GM10248 (cell line): ENCODE measurements at regions of chr11 and their contacts with region 1.

Region 1: DNA sequence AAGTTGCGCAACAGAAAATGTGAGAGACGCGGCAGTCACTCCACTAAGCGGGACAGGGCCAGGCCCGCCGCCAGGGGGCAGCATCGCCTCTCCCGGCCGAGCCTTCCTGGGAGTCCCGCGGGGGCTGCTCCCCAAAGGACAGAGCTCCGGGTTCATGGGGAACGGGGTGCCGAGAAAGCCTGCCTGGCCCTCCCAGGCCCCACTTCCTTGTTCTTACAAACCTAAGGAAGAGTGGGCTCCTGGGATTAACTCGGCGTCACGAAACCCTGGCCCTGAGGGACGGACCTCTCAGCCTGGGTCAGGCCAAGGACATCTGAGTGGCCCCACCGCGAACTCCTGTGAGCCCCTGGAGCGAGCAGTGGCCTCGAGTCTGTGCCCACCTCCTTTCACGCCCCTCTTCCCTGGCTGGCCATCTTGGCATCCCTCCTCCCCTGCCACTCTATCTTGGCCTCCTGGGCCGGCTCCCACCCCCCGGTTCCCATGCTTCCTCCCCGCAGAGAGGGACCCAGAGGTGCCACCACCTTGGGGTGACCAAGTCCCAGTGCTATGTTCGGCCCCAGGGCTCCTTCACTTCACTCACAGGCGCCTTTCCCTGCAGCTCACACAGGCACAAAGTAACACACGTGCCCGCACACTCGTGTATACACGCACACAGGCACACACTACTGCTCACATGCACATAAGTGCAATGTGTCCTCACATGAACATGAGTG is 99.9 kb upstream of the FGF3 start:
- DNase-seq: peak; percentile 81
- CTCF ChIP-seq: peak; percentile 84

Region 2: DNA sequence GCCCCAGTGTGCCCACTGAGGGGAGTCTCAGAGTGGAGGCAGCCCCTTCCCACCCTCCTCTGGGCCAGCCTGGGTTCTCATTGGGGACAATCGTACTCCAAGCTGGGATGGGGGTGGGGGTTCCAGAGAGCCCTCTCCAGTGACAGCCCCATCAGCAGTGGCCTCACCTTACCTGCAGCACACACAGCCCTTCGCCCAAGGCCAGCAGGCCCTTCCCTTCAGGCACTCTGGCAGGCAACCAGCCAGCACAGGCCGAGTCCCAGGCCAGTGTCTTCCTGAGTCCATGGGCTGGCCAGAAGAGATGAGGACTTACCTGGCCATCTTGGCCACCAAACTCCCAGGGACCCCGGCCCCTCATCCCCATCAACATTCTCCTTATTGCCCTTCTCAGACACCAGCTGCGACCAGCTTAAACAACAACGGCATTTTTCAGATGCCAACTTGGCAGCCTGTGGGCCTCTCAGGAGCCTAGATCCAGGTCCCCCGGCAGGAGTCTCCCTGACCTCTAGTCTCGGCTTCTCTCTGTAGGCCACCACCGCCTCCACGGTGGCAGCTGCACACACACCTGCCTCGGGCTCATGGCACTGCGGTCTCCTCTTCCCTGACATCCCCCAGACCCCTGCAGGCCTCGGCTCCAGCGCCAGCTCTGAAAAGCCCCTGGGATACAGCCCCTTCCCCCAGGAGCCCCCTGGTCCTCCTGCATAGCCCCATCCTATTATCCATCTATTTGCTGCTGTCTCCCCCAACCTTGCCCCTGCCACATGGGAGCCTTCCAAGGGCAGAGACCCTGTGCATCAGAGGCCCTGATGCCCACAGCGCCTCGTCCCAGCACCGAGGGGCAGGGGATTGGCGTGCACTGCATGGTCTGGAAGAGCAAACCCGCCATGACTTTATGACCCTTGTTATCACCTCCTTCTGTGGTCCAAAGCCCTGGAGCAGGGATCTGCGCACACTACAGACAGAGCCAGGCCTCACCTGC is 11.3 kb after region 1 on chr11:
- CTCF ChIA-PET with region 1: interaction called, 11 read pairs
- POLR2A ChIA-PET with region 1: no interaction called
- DNase-seq: no peak
- CTCF ChIP-seq: no peak

Region 3: GRCh38 chr11:70183483-70184169 is 264.5 kb after region 1 on chr11:
- CTCF ChIA-PET with region 1: interaction called, 10 read pairs
- POLR2A ChIA-PET with region 1: no interaction called
- DNase-seq: no peak
- CTCF ChIP-seq: no peak